Activated CD8-positive, alpha-beta T cell treated with anti-CD3 and anti-CD28 coated beads for 36 hours (primary cell): ENCODE measurements at regions of chr12 and their contacts with region 1.

Region 1: GRCh38 chr12:34218165-34219045 is 196.1 kb downstream of the ALG10 start:
- DNase-seq: peak; percentile 82
- ATAC-seq: peak; percentile 79
- H3K4me3 Mint-ChIP-seq: peak overlapping the region; percentile 67
- H3K27ac Mint-ChIP-seq: no peak overlapping the region
- H3K4me1 Mint-ChIP-seq: peaks cover 3% of the 10 kb centered on the region
- H3K27me3 Mint-ChIP-seq: peaks cover 9% of the 10 kb centered on the region
- CTCF ChIP-seq: peak; percentile 90

Region 2: DNA sequence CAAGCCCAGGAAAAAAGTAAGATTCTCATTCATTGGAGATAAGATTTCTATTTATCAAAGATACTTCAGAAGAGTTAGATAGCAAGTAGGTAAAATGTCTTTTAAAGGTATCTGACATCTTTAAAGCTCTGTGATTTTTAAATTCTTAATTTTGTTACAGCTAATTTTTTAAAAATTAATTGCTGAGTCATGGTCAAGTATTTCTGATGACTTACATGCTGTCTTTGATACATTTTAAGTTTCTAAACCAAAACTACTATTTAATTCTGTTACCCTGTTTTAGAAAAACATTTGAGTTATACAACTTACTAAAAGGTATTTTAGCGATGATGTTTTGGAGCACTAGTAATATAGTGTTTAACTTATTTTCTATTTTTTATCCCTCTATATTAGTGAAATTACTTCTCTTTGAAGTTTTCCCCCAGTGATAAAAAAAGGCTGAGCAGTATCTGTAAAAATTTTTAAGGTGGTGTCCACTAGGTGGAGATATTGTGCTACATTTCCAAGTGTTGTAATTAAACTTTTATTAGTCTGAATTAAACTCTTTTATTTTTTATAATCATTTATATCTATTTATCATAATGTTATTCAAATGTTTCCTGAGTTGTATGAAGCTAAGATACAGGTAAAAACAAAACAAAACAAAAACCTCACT is 184.7 kb before region 1 on chr12:
- CTCF ChIA-PET with region 1: no interaction called
- POLR2A ChIA-PET with region 1: no interaction called
- intact Hi-C with region 1: loop called (anchors 10 kb)
- DNase-seq: no peak
- ATAC-seq: no peak
- H3K4me3 Mint-ChIP-seq: no peak overlapping the region
- H3K27ac Mint-ChIP-seq: no peak overlapping the region
- H3K4me1 Mint-ChIP-seq: no peaks in the 10 kb centered on the region
- H3K27me3 Mint-ChIP-seq: no peaks in the 10 kb centered on the region
- CTCF ChIP-seq: peak; percentile 72

Region 3: DNA sequence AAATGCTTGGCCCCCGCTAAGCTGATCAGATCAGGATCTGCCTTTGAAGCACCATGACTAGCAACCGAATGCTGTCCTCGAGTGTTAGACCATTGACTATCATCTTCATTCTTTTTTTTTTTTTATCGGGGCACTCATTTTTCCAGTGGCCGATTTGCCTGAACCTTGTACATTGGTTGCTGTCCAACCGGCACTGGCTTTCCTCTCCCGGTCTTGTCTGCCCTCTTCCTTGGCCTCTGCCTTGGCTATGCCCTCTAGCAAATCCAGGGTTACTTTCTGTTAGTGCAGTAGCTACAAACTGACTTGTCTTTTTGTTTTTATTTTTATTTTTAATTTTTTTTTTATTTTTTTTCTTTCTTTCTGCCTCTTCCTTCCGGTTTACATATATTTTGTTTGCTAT is 93.8 kb before region 1 on chr12:
- CTCF ChIA-PET with region 1: interaction called, 9 read pairs
- POLR2A ChIA-PET with region 1: no interaction called
- intact Hi-C with region 1: loop called (anchors 2 kb)
- DNase-seq: no peak
- ATAC-seq: no peak
- H3K4me3 Mint-ChIP-seq: no peak overlapping the region
- H3K27ac Mint-ChIP-seq: no peak overlapping the region
- H3K4me1 Mint-ChIP-seq: peaks cover 6% of the 10 kb centered on the region
- H3K27me3 Mint-ChIP-seq: no peaks in the 10 kb centered on the region
- CTCF ChIP-seq: no peak

Region 4: GRCh38 chr12:34363050-34363673 is 144.8 kb after region 1 on chr12:
- CTCF ChIA-PET with region 1: no interaction called
- POLR2A ChIA-PET with region 1: no interaction called
- intact Hi-C with region 1: no loop called
- DNase-seq: no peak
- ATAC-seq: no peak
- H3K4me3 Mint-ChIP-seq: no peak overlapping the region
- H3K27ac Mint-ChIP-seq: no peak overlapping the region
- H3K4me1 Mint-ChIP-seq: no peaks in the 10 kb centered on the region
- H3K27me3 Mint-ChIP-seq: no peaks in the 10 kb centered on the region
- CTCF ChIP-seq: no peak